WTC11 (cell line): ENCODE measurements at regions of chr15 and their contacts with region 1.

Region 1: GRCh38 chr15:48298914-48299313 is 32.3 kb upstream of the DUT start:
- DNase-seq: no peak
- ATAC-seq: peak; percentile 45
- H3K4me3 Mint-ChIP-seq: peak overlapping the region; percentile 46
- H3K27ac Mint-ChIP-seq: peak overlapping the region; percentile 88
- H3K4me1 Mint-ChIP-seq: peaks cover 49% of the 10 kb centered on the region
- H3K27me3 Mint-ChIP-seq: no peaks in the 10 kb centered on the region
- CTCF ChIP-seq: no peak

Region 2: DNA sequence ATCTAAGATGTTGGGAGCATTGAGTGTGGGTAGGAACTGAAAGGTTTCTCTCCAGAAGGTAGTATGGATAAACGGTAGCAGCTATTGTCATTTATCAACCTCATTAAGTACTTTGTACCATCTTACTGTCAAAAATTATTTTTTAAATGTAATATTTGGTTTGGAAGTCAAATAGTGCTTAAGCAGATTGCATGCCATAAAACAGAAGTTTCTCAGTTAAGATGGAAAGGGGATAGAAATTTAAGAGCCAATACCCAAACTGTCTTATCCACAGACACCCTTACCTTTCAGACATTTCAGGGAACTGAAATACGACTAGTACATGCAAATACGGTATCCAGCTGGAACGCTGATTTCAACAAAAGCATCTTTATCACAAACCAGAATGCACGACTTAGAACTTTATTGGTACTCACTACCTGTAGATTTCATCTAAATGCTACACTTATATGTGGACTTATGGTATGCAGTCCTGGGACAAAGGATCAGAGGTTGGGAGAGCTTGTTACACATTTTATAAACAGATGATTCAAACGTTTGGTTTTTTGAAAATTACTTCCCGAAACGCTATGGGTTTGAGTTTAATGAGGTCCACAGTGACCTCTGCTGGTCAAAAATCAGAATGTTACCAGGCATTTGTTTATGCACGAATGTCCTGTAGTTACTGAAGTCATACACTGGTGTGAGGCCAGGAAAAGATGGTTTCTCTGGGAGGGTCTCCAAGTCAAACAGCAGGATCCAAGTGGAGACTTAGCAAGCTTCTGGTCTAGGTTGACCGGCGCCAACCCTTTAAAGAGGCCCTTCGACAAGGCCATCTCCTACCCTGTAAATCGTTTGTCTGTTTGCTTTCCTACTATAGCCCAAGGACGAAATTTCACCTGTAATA is 13.3 kb before region 1 on chr15:
- CTCF ChIA-PET with region 1: interaction called, 14 read pairs
- POLR2A ChIA-PET with region 1: no interaction called
- DNase-seq: peak; percentile 33
- ATAC-seq: peak; percentile 85
- H3K4me3 Mint-ChIP-seq: no peak overlapping the region
- H3K27ac Mint-ChIP-seq: no peak overlapping the region; the same call in 1 of the 2 replicates
- H3K4me1 Mint-ChIP-seq: peaks cover 56% of the 10 kb centered on the region
- H3K27me3 Mint-ChIP-seq: no peaks in the 10 kb centered on the region
- CTCF ChIP-seq: peak; percentile 56

Region 3: DNA sequence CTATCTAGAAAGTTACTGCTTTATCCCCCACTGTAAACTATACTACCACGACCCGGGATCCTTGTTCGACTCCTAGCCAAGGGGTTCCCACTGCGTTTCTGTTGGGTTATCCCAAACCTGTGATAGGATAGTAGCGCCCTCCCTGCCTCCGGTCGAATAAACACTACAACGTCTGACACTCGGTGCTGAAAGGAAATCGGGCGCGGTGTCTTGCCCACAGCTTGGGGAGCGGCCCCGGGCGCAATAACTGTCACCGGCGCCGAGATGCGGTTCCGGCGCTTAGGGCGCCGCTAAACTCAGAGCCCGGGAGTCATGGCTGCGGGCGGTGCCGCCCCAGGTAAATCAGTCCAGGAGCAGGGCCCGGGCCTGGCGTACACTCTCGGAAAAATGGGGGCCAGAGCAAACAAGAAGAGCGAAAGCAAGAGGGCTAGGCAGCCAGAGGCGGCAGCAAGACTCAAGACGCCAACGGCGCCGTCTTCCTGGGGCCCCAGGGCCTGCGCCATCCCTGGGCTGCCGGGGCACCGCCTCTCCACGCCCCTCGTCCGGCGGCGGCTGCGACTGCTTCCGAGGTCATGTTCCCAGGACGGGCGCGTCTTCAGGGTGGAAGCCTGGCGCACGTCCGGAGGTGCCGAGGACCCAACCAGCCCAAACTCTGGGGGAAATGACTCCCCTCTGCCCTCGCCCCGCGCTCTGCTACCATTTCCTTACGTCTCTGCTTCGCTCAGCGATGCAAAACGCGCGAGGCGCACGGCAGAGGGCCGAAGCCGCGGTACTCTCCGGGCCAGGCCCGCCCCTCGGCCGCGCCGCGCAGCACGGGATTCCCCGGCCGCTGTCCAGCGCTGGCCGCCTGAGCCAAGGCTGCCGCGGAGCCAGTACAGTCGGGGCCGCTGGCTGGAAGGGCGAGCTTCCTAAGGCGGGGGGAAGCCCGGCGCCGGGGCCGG is 32.2 kb after region 1 on chr15 and contains the start of gene DUT:
- CTCF ChIA-PET with region 1: interaction called, 15 read pairs
- POLR2A ChIA-PET with region 1: no interaction called
- DNase-seq: peak; percentile 81
- ATAC-seq: peak; percentile 80
- H3K4me3 Mint-ChIP-seq: peak within 1 kb of the TSS; percentile 97
- H3K27ac Mint-ChIP-seq: peak within 1 kb of the TSS; percentile 89
- H3K4me1 Mint-ChIP-seq: peaks cover 46% of the 10 kb centered on the region
- H3K27me3 Mint-ChIP-seq: no peaks in the 10 kb centered on the region
- CTCF ChIP-seq: no peak
- total RNA-seq, gene DUT: 195 to 204 TPM (median 195 TPM) in 3 replicates

Region 4: DNA sequence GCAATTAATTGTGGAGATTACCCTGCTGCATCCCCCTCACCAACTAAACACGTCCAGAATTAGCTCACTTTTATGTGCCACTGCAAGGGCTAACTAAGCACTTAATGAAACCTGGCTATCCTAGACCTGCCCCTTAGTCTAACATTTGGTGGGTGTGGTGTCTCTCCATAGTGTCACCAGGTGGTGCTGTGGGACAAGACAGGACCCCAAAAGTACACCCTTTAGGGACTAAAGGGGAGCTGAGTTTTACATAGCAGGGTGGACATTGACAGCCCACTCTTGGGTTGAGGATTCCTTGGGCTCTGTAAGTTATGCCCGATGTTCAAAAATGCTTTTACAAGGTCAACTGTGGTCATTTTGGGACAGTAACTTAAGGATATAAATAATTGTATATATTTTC is 38.0 kb after region 1 on chr15:
- CTCF ChIA-PET with region 1: interaction called, 15 read pairs
- POLR2A ChIA-PET with region 1: no interaction called
- DNase-seq: peak; percentile 40
- ATAC-seq: peak; percentile 81
- H3K4me3 Mint-ChIP-seq: no peak overlapping the region
- H3K27ac Mint-ChIP-seq: no peak overlapping the region
- H3K4me1 Mint-ChIP-seq: peaks cover 35% of the 10 kb centered on the region
- H3K27me3 Mint-ChIP-seq: no peaks in the 10 kb centered on the region
- CTCF ChIP-seq: peak; percentile 28